GM12878 (cell line): ENCODE measurements at regions of chr18 and their contacts with region 1.

Region 1: GRCh38 chr18:23131693-23132319 is 3.5 kb upstream of the CABLES1 start:
- DNase-seq: peak; percentile 58
- ATAC-seq: peak; percentile 44
- H3K4me3 ChIP-seq: no peak overlapping the region
- H3K27ac ChIP-seq: no peak overlapping the region
- H3K4me1 ChIP-seq: peaks cover 18% of the 10 kb centered on the region
- H3K27me3 ChIP-seq: no peaks in the 10 kb centered on the region
- CTCF ChIP-seq: peak; percentile 64 to 82 (median 67)
- EP300 ChIP-seq: no peak
- POLR2A ChIP-seq: no peak
- RAD21 ChIP-seq: peak; percentile 89

Region 2: GRCh38 chr18:23003289-23003688 is 128.5 kb before region 1 on chr18:
- CTCF ChIA-PET with region 1: no interaction called
- POLR2A ChIA-PET with region 1: no interaction called
- RAD21 ChIA-PET with region 1: no interaction called
- SMC1A ChIA-PET with region 1: no interaction called
- in situ Hi-C with region 1: no loop called
- intact Hi-C with region 1: no loop called
- DNase-seq: no peak
- ATAC-seq: no peak
- H3K4me3 ChIP-seq: no peak overlapping the region
- H3K27ac ChIP-seq: no peak overlapping the region
- H3K4me1 ChIP-seq: no peaks in the 10 kb centered on the region
- H3K27me3 ChIP-seq: no peaks in the 10 kb centered on the region
- CTCF ChIP-seq: no peak
- EP300 ChIP-seq: no peak
- POLR2A ChIP-seq: no peak
- RAD21 ChIP-seq: no peak

Region 3: GRCh38 chr18:23207191-23207955 is 75.6 kb after region 1 on chr18:
- CTCF ChIA-PET with region 1: interaction called, 12 read pairs
- POLR2A ChIA-PET with region 1: no interaction called
- RAD21 ChIA-PET with region 1: interaction called, 5 read pairs
- SMC1A ChIA-PET with region 1: no interaction called
- in situ Hi-C with region 1: no loop called
- intact Hi-C with region 1: no loop called
- DNase-seq: no peak
- ATAC-seq: peak; percentile 69
- H3K4me3 ChIP-seq: no peak overlapping the region
- H3K27ac ChIP-seq: no peak overlapping the region
- H3K4me1 ChIP-seq: no peaks in the 10 kb centered on the region
- H3K27me3 ChIP-seq: no peaks in the 10 kb centered on the region
- CTCF ChIP-seq: peak in 2 of 3 experiments; percentile 55 to 59; a peak in 4 of 6 replicates
- EP300 ChIP-seq: no peak
- POLR2A ChIP-seq: no peak
- RAD21 ChIP-seq: no peak

Region 4: GRCh38 chr18:23231340-23232021 is 99.7 kb after region 1 on chr18:
- CTCF ChIA-PET with region 1: interaction called, 59 read pairs
- POLR2A ChIA-PET with region 1: interaction called, 86 read pairs
- RAD21 ChIA-PET with region 1: interaction called, 114 read pairs
- SMC1A ChIA-PET with region 1: interaction called, 35 read pairs
- in situ Hi-C with region 1: loop called (anchors 5 kb)
- intact Hi-C with region 1: loop called (anchors 1 kb)
- DNase-seq: peak; percentile 99
- ATAC-seq: peak; percentile 81
- H3K4me3 ChIP-seq: no peak overlapping the region
- H3K27ac ChIP-seq: peak overlapping the region; percentile 95
- H3K4me1 ChIP-seq: peaks cover 55% of the 10 kb centered on the region
- H3K27me3 ChIP-seq: no peaks in the 10 kb centered on the region
- CTCF ChIP-seq: no peak
- EP300 ChIP-seq: peak; percentile 100
- POLR2A ChIP-seq: peak; percentile 51
- RAD21 ChIP-seq: no peak; the same call in 1 of the 2 replicates

Region 5: DNA sequence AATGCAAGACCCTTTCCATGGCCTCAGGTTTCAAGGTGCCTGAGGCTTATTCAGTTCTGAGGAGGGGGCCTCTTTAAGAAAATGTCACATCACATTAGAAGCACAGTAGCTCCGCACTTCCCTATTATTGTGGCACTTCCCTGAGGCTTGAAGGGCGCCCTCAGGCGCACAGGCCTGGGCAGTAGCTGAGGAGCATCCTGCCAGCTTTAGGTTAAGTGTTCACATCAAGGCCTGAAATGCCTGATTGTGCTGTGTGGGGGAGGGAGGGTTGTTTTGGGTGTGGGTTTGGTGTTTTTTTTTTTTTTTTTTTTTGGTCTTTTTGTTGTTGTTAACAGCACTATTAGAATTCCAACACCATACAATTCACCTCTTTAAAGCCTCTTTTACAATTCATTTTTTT is 111.4 kb after region 1 on chr18:
- CTCF ChIA-PET with region 1: interaction called, 9 read pairs
- POLR2A ChIA-PET with region 1: interaction called, 14 read pairs
- RAD21 ChIA-PET with region 1: interaction called, 29 read pairs
- SMC1A ChIA-PET with region 1: interaction called, 19 read pairs
- in situ Hi-C with region 1: no loop called
- intact Hi-C with region 1: no loop called
- DNase-seq: no peak
- ATAC-seq: no peak
- H3K4me3 ChIP-seq: no peak overlapping the region
- H3K27ac ChIP-seq: peak overlapping the region; percentile 30; the same call in 1 of the 2 replicates
- H3K4me1 ChIP-seq: peaks cover 38% of the 10 kb centered on the region
- H3K27me3 ChIP-seq: no peaks in the 10 kb centered on the region
- CTCF ChIP-seq: no peak; a peak in 1 of 6 replicates
- EP300 ChIP-seq: no peak
- POLR2A ChIP-seq: no peak
- RAD21 ChIP-seq: no peak

Region 6: DNA sequence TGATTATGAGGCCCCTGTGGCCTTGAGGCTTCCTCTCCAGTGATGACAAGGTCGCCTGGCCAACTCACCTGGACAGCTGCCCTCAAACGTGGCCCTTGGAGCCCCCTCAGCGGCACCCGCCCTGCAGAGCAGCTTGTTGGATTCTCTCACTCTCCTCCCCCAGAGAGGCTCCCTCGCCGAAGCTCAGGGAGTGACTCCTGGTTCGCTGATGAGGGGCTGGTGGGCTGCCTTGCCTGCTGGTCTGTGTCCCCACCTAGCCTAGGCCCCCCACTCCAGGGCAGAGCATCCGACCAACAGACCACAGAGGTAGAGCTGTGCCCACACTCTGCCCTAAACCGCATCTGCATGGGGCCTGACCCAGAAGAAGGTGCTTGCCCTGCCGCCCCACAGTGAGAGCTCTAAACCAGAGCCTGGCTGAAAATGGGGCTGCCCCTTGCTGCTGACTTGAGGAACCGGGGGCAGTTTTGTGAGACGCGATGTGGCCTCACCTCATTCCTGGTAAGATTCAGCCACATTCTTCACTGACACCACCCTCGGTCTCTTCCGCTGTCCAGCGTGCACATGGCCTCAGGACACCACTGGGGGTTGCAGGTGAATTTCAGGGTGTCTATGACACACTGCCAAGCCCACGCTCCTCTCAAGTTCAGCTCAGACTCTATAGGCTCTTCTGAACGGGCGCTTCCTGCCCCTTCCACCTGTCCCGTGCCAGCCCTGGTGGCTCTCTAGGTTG is 135.1 kb after region 1 on chr18:
- CTCF ChIA-PET with region 1: interaction called, 16 read pairs
- POLR2A ChIA-PET with region 1: no interaction called
- RAD21 ChIA-PET with region 1: interaction called, 7 read pairs
- SMC1A ChIA-PET with region 1: interaction called, 10 read pairs
- in situ Hi-C with region 1: no loop called
- intact Hi-C with region 1: no loop called
- DNase-seq: no peak
- ATAC-seq: peak; percentile 83
- H3K4me3 ChIP-seq: no peak overlapping the region
- H3K27ac ChIP-seq: peak overlapping the region; percentile 37; the same call in 1 of the 2 replicates
- H3K4me1 ChIP-seq: peaks cover 14% of the 10 kb centered on the region
- H3K27me3 ChIP-seq: no peaks in the 10 kb centered on the region
- CTCF ChIP-seq: no peak
- EP300 ChIP-seq: peak in 1 of 2 experiments; percentile 11; a peak in 2 of 4 replicates
- POLR2A ChIP-seq: no peak
- RAD21 ChIP-seq: no peak

Region 7: GRCh38 chr18:23406271-23406787 is 274.5 kb after region 1 on chr18:
- CTCF ChIA-PET with region 1: interaction called, 42 read pairs
- POLR2A ChIA-PET with region 1: no interaction called
- RAD21 ChIA-PET with region 1: interaction called, 61 read pairs
- SMC1A ChIA-PET with region 1: interaction called, 22 read pairs
- in situ Hi-C with region 1: loop called (anchors 5 kb)
- intact Hi-C with region 1: loop called (anchors 1 kb)
- DNase-seq: no peak
- ATAC-seq: no peak
- H3K4me3 ChIP-seq: no peak overlapping the region
- H3K27ac ChIP-seq: no peak overlapping the region
- H3K4me1 ChIP-seq: no peaks in the 10 kb centered on the region
- H3K27me3 ChIP-seq: no peaks in the 10 kb centered on the region
- CTCF ChIP-seq: no peak
- EP300 ChIP-seq: no peak
- POLR2A ChIP-seq: no peak
- RAD21 ChIP-seq: no peak